ENCODE measurements at regions of chr4 and their contacts with region 1.

Region 1: GRCh38 chr4:84258905-84259830 is 239.9 kb downstream of the NKX6-1 start:
- DNase-seq: peak; percentile 7
- H3K4me3 ChIP-seq: no peak overlapping the region
- H3K27ac ChIP-seq: no peak overlapping the region
- H3K4me1 ChIP-seq: no peaks in the 10 kb centered on the region
- H3K27me3 ChIP-seq: no peaks in the 10 kb centered on the region
- CTCF ChIP-seq: peak; percentile 46 to 59
- POLR2A ChIP-seq: no peak

Region 2: DNA sequence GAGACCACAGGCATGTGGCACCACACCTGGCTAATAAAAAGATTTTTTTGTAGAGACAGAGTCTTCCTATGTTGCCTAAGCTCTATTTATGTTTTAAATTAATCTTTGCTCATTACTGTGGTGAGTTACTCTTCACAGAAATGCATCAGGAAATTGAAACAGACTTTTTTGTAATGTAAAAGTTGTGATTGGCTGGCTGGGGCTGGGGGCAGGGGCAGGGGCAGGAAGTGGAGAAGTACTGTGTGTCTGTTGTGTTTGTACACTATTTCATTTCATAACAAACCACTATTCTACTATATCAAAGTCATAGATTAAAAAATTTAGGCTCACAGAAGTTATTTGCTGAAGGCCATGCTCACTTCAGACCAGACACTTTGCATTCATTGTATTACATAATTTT is 755.2 kb before region 1 on chr4:
- CTCF ChIA-PET with region 1: no interaction called
- POLR2A ChIA-PET with region 1: no interaction called
- dilution Hi-C with region 1: no loop called
- intact Hi-C with region 1: loop called (anchors 5 kb)
- DNase-seq: no peak
- H3K4me3 ChIP-seq: no peak overlapping the region
- H3K27ac ChIP-seq: no peak overlapping the region
- H3K4me1 ChIP-seq: no peaks in the 10 kb centered on the region
- H3K27me3 ChIP-seq: peaks cover 0 to 2% of the 10 kb centered on the region in 2 experiments
- CTCF ChIP-seq: no peak
- POLR2A ChIP-seq: no peak

Region 3: GRCh38 chr4:83771113-83771705 is 488.0 kb before region 1 on chr4:
- CTCF ChIA-PET with region 1: no interaction called
- POLR2A ChIA-PET with region 1: no interaction called
- dilution Hi-C with region 1: no loop called
- intact Hi-C with region 1: loop called (anchors 1 kb)
- DNase-seq: peak; percentile 24
- H3K4me3 ChIP-seq: no peak overlapping the region
- H3K27ac ChIP-seq: no peak overlapping the region
- H3K4me1 ChIP-seq: no peaks in the 10 kb centered on the region
- H3K27me3 ChIP-seq: no peaks in the 10 kb centered on the region
- CTCF ChIP-seq: peak; percentile 28 to 53
- POLR2A ChIP-seq: no peak

Region 4: DNA sequence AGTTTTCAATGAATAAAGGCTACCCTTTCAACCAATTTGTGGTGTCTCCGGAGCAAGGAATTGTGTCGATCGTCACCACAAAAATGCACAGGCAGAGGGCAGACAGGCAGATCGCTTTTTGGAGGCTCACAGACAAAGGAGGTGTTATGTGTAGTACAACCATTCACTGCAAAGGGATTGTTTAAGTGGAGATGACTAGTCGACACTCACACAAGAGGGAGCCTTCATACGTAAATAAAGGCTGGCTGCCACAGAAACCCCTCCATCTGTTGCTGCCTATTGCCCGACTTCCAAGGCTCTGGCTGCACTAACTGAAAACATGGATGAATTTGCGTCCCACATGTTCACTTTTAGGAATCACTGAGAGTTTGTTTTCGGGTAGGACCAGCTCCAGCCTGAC is 41.1 kb before region 1 on chr4:
- CTCF ChIA-PET with region 1: no interaction called
- POLR2A ChIA-PET with region 1: no interaction called
- dilution Hi-C with region 1: no loop called
- intact Hi-C with region 1: no loop called
- DNase-seq: no peak
- H3K4me3 ChIP-seq: no peak overlapping the region
- H3K27ac ChIP-seq: no peak overlapping the region
- H3K4me1 ChIP-seq: no peaks in the 10 kb centered on the region
- H3K27me3 ChIP-seq: no peaks in the 10 kb centered on the region
- CTCF ChIP-seq: no peak
- POLR2A ChIP-seq: no peak

Region 5: GRCh38 chr4:84336964-84337705 is 78.0 kb after region 1 on chr4:
- CTCF ChIA-PET with region 1: no interaction called
- POLR2A ChIA-PET with region 1: no interaction called
- dilution Hi-C with region 1: no loop called
- intact Hi-C with region 1: no loop called
- DNase-seq: no peak
- H3K4me3 ChIP-seq: no peak overlapping the region
- H3K27ac ChIP-seq: no peak overlapping the region
- H3K4me1 ChIP-seq: no peaks in the 10 kb centered on the region
- H3K27me3 ChIP-seq: no peaks in the 10 kb centered on the region
- CTCF ChIP-seq: no peak
- POLR2A ChIP-seq: no peak

Measured in endothelial cell of umbilical vein (primary cell).